Heart right ventricle (tissue), 16 donors: ENCODE measurements at regions of chr1 and their contacts with region 1.

Region 1: DNA sequence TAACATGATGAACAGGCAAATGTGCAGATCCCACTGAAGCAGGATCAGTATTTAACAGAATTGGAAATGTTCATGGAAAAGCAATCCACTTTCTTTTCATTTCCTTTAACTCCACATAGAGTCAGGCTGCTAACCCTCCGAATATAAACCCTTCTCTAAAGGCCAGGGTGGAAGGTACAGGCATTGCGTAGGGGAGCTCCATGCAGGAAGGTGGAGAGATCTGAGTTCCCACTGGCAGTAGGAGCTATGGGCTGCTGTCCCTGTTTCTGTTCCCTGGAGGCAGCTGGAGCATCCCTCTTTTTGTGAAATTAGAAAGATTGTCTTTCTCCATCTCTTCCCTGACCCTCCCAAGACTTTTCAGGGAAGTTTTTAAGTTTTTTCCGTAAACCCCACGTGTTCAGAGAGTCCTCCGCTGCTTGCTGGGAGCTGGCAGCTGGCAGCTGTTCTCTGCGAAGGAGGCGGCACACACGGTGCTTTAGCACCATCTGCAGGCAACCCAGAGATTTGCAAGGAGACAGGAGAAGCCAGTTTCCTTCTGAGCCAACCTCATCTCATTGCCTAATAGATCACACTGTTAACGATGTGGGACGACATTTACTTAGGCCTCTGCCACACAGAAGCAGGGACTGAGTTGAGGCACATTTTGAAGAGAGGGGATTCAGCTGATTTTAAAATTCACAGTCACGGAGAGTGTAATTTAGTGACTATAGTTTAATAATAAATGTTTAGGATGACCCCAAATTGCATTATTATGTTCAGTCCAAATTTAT is 55.4 kb upstream of the HOOK1 start:
- DNase-seq: peak; percentile 76 to 79
- ATAC-seq: peak; percentile 92 to 96 (median 94)
- H3K4me3 ChIP-seq: peak overlapping the region in 9 of 10 donors; percentile 14 to 42 (median 29)
- H3K27ac ChIP-seq: peak overlapping the region in 9 of 10 donors; percentile 13 to 75 (median 55)
- H3K4me1 ChIP-seq: peaks cover 0 to 16% (median 7%) of the 10 kb centered on the region in 9 donors
- H3K27me3 ChIP-seq: no peaks in the 10 kb centered on the region
- CTCF ChIP-seq: peak; percentile 92 to 99 (median 96)

Region 2: DNA sequence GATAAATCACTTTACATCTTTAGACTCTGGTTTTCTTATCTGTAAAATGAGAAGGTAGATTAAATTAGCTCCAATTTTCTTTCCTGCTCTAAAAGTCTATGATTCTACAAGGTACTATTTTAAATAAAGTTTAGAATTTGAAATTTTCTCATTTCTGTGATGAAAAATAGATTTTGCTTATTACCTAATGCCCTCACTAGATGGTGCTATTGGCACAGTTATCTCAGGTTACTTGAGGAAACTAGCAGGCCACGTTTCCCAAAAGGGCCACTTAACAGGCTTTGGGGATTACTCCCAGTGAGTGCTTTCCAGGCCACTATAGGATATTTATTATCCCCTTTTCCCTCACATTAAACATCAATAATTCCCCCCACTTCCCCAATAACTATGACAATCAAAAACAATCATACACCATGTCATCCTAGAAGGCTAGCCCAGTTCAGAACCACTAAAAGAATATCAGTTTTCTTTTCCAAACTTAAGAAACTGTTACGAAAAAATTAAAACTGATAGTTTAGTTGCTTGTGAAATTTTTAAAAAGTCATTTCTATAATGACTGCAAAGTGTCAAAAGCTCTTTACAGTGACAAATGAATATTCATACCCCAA is 1243.4 kb before region 1 on chr1:
- intact Hi-C with region 1: loop called in 3 of 10 experiments (anchors 5 to 10 kb)
- DNase-seq: peak in 1 of 2 donors; percentile 43
- ATAC-seq: peak in 4 of 8 donors; percentile 60 to 75 (median 70)
- H3K4me3 ChIP-seq: no peak overlapping the region
- H3K27ac ChIP-seq: peak overlapping the region in 1 of 10 donors; percentile 24
- H3K4me1 ChIP-seq: peaks cover 0 to 11% (median 0%) of the 10 kb centered on the region in 9 donors
- H3K27me3 ChIP-seq: no peaks in the 10 kb centered on the region
- CTCF ChIP-seq: peak; percentile 51 to 88 (median 76)

Region 3: GRCh38 chr1:58755468-58755872 is 1003.9 kb before region 1 on chr1:
- intact Hi-C with region 1: loop called in 2 of 10 experiments (anchors 5 to 10 kb)
- DNase-seq: peak; percentile 36 to 61
- ATAC-seq: peak; percentile 81 to 96 (median 93)
- H3K4me3 ChIP-seq: peak overlapping the region in 2 of 10 donors; percentile 3 to 8
- H3K27ac ChIP-seq: peak overlapping the region in 9 of 10 donors; percentile 17 to 74 (median 66)
- H3K4me1 ChIP-seq: peaks cover 3 to 32% (median 19%) of the 10 kb centered on the region in 9 donors
- H3K27me3 ChIP-seq: no peaks in the 10 kb centered on the region
- CTCF ChIP-seq: no peak

Region 4: GRCh38 chr1:58903514-58904298 is 855.6 kb before region 1 on chr1:
- intact Hi-C with region 1: loop called in 1 of 10 experiments (anchors 10 kb)
- DNase-seq: peak; percentile 95 to 96
- ATAC-seq: peak; percentile 93 to 99 (median 96)
- H3K4me3 ChIP-seq: peak overlapping the region in 9 of 10 donors; percentile 35 to 67 (median 58)
- H3K27ac ChIP-seq: peak overlapping the region; percentile 90 to 99 (median 96)
- H3K4me1 ChIP-seq: peaks cover 5 to 43% (median 27%) of the 10 kb centered on the region in 9 donors
- H3K27me3 ChIP-seq: no peaks in the 10 kb centered on the region
- CTCF ChIP-seq: peak in 3 of 9 donors; percentile 6 to 7 (median 6)

Region 5: GRCh38 chr1:59678493-59679228 is 80.7 kb before region 1 on chr1:
- intact Hi-C with region 1: no loop called
- DNase-seq: no peak
- ATAC-seq: peak in 2 of 8 donors; percentile 35 to 43
- H3K4me3 ChIP-seq: no peak overlapping the region
- H3K27ac ChIP-seq: peak overlapping the region in 7 of 10 donors; percentile 17 to 54 (median 42)
- H3K4me1 ChIP-seq: peaks cover 0 to 59% (median 12%) of the 10 kb centered on the region in 9 donors
- H3K27me3 ChIP-seq: no peaks in the 10 kb centered on the region
- CTCF ChIP-seq: no peak

Region 6: GRCh38 chr1:59692591-59692990 is 66.8 kb before region 1 on chr1:
- intact Hi-C with region 1: no loop called
- DNase-seq: no peak
- ATAC-seq: peak in 6 of 8 donors; percentile 39 to 71 (median 56)
- H3K4me3 ChIP-seq: no peak overlapping the region
- H3K27ac ChIP-seq: peak overlapping the region in 3 of 10 donors; percentile 12 to 69 (median 57)
- H3K4me1 ChIP-seq: peaks cover 0 to 48% (median 12%) of the 10 kb centered on the region in 9 donors
- H3K27me3 ChIP-seq: no peaks in the 10 kb centered on the region
- CTCF ChIP-seq: no peak

Region 7: GRCh38 chr1:59718064-59718988 is 41.0 kb before region 1 on chr1:
- intact Hi-C with region 1: loop called in 1 of 10 experiments (anchors 5 kb)
- DNase-seq: no peak
- ATAC-seq: peak in 7 of 8 donors; percentile 46 to 85 (median 68)
- H3K4me3 ChIP-seq: no peak overlapping the region
- H3K27ac ChIP-seq: peak overlapping the region in 9 of 10 donors; percentile 24 to 69 (median 47)
- H3K4me1 ChIP-seq: peaks cover 0 to 18% (median 5%) of the 10 kb centered on the region in 9 donors
- H3K27me3 ChIP-seq: no peaks in the 10 kb centered on the region
- CTCF ChIP-seq: peak in 5 of 9 donors; percentile 27 to 52 (median 35)